BJ (cell line): ENCODE measurements at regions of chr18 and their contacts with region 1.

Region 1: GRCh38 chr18:36688020-36688965 is 140.5 kb downstream of the TPGS2 start:
- DNase-seq: no peak
- H3K4me3 ChIP-seq: no peak overlapping the region
- H3K27me3 ChIP-seq: no peaks in the 10 kb centered on the region
- CTCF ChIP-seq: peak; percentile 96

Region 2: DNA sequence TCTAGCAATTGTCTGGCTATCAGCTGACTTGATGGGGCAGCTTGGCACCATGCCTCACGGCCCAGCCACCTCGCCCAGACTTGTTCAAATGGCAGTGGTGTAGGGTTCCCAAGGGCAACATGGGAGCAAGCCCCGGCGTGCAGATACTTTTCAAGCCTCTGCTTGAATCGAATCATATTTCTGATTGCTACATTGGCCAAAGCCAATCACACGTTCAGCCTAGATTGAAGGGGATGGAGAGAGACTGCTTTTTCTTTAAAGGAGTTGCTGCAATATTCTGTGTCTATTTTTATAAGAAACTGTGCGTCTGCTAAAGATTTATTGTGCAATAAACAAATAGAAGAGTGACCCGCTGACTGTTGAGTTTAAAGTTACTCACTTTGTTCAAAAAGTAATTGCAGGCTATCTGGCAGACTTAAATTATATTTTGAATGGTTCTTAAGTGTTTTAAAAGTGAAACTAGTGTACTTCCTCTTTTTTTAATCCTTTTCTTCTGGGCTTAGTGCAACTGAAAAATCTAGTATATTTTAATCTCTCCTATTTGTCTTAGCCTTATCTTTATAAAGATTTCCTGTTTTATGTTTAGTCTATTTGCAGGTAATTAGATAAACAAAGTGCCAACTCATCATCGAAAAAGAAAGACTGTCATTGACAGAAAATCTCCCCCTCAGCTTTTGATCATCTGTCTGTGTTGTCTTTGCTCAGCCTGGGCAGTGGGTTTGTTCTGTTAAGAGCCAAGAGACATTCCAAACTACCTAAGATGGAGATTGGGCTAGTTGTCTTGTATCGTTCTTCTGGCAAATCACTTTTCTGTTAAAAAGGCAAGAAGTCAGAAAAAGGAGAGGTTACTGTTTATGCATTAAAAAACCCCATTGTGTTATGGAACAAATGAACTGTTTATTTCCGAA is 15.6 kb before region 1 on chr18:
- CTCF ChIA-PET with region 1: interaction called, 15 read pairs
- POLR2A ChIA-PET with region 1: no interaction called
- DNase-seq: peak; percentile 49
- H3K4me3 ChIP-seq: no peak overlapping the region
- H3K27me3 ChIP-seq: no peaks in the 10 kb centered on the region
- CTCF ChIP-seq: no peak

Region 3: GRCh38 chr18:36757081-36757480 is 68.8 kb after region 1 on chr18:
- CTCF ChIA-PET with region 1: interaction called, 21 read pairs
- POLR2A ChIA-PET with region 1: no interaction called
- DNase-seq: no peak
- H3K4me3 ChIP-seq: no peak overlapping the region
- H3K27me3 ChIP-seq: no peaks in the 10 kb centered on the region
- CTCF ChIP-seq: peak; percentile 62

Region 4: DNA sequence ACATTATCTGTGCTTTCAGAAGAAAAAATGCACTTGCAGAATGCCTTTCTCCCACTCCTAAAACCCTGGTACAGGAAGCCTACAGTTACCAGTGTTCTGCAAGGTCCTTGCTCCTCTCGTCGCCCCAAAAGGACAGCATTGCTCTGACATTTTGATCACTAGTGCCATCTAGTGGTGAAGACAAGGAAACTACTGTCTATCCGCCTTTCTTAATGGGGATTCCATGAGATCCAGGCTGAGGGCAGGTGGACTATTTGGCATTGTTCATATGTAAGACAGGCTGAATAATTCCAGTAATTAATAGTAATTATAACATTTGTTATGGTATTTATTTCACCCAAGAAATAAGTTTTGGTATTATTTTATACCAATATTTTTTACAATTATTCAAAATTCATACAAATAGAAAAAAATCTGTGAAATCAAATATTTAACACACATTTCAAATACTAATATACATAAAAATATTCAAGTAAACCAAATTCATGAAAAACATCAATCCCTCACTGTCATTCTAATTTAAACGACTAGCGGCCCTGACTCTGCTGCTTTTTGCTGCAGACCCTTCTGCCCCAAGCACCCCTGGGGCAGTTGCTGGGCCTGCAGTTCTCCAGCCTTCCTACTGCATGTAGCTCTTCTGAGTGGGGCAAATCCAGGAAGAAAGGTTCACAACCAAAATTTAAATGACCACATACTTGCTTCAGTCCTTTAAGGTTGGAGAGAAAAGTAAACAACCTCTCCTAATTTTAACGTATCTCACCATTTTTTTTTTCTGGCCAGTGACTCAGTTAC is 121.5 kb after region 1 on chr18:
- CTCF ChIA-PET with region 1: interaction called, 14 read pairs
- POLR2A ChIA-PET with region 1: no interaction called
- DNase-seq: no peak
- H3K4me3 ChIP-seq: no peak overlapping the region
- H3K27me3 ChIP-seq: no peaks in the 10 kb centered on the region
- CTCF ChIP-seq: peak; percentile 81